Ovary (tissue), 10 donors: ENCODE measurements at regions of chr12 and their contacts with region 1.

Region 1: DNA sequence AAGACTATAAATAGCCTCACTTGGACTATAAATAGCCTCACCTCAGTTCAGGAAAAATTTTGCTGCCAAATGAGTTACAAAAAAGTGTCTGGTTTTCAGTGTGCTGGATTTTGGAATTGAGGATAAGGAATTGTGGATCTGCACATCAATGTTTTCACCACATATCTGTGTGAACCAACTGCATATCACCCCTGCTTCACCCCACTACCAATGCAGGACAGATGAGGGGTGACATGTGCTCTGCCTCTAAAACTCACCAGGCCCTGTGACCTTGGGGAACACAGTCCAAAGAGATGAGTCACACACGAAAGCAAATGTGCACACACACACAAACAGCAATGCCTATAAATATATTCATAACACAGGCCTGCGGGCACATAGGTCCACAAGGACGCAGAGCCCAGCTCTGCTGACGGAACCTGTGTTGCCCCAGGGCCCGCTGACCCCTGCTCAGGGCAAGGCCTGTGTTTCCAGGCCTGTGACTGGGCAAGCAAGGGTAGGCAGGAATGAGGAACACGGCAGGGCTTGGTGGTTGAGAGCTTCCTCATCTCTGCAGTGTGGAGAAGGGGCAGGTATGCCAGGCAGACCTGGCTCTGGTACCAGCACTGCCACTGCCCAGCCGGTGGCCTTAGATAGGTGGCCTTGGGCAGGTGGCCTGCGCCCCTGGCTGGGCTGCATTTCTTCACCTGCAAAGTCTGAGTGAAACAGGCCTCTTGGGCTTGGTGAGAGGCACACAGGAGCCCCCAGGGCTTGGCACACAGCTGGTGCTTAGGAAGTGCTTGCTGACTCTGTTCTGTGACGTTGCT is 82.4 kb downstream of the ARL6IP4 start:
- DNase-seq: peak in 3 of 5 donors; percentile 67 to 74 (median 74)
- H3K4me3 ChIP-seq: no peak overlapping the region
- H3K27ac ChIP-seq: peak overlapping the region; percentile 11 to 91
- H3K4me1 ChIP-seq: peaks cover 69% of the 10 kb centered on the region
- H3K27me3 ChIP-seq: no peaks in the 10 kb centered on the region
- CTCF ChIP-seq: no peak
- EP300 ChIP-seq: no peak
- POLR2A ChIP-seq: no peak

Region 2: DNA sequence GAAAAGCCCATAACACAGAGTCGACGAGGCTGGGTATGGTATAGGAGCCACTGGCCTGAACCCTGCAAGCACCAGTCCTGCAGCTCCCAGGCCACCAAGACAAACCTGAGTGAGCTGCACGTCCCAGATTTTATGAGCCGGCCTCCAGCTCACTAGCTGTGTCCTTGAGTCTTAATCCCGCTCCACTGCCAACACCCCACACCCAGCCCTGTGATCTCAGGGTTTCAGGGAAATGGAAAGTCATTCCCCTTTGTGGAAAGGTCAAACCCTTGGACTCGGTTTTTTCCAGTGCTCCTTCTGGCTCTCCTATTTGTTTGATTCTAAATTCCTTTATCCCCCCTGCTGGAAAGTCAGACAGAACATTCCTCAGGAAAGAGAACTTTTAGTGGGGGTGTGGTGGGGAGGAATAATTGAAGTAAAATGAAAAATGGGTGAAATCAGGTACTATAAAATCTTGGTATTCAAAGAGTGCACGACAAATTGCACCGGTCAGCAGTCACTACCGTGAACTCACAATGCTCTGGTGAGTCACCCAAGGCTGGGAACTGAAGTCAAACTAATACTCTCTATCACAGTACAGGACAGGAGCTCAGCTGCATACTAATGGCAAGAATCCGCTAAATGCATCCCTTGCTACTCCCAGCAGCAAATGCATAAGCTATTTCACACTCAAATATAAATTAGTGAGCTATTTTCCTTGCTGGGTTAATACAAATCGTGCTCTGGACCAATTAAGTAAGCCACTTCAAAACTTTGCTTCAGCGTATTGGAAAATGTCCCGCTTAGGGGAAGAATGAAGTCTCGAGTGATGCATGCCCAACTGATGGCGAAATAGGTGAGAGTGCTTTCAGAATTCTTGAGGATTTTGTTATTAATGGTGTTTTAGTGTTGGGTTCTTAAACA is 79.0 kb after region 1 on chr12:
- intact Hi-C with region 1: loop called in 2 of 4 experiments (anchors 5 kb)
- DNase-seq: peak; percentile 73 to 84 (median 82)
- H3K4me3 ChIP-seq: no peak overlapping the region
- H3K27ac ChIP-seq: peak overlapping the region; percentile 77 to 94
- H3K4me1 ChIP-seq: peaks cover 36% of the 10 kb centered on the region
- H3K27me3 ChIP-seq: no peaks in the 10 kb centered on the region
- CTCF ChIP-seq: no peak
- EP300 ChIP-seq: peak; percentile 45
- POLR2A ChIP-seq: no peak

Region 3: DNA sequence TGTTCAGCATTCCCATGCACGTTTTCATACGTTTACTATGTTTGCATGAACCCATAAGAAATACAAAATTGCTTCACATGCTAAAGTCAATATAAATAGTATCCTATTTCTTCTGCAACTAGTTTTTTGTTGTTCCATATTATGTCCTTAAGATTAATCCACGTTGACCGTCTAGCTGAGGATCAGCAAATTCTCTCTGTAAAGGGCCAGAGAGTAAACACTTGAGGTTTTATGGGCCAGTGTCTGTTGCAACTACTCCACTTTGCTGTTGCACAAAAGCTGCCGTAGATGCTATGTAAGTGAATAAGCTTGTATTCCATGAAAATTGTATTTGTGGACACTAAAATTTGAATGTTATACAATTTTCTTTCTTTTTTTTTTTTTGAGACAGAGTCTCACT is 109.1 kb after region 1 on chr12:
- intact Hi-C with region 1: no loop called
- DNase-seq: no peak
- H3K4me3 ChIP-seq: no peak overlapping the region
- H3K27ac ChIP-seq: no peak overlapping the region
- H3K4me1 ChIP-seq: no peaks in the 10 kb centered on the region
- H3K27me3 ChIP-seq: no peaks in the 10 kb centered on the region
- CTCF ChIP-seq: no peak
- EP300 ChIP-seq: no peak
- POLR2A ChIP-seq: no peak